Psoas muscle (tissue), 8 donors: ENCODE measurements at regions of chr3 and their contacts with region 1.

Region 1: GRCh38 chr3:44761424-44762169 is at the starts of genes KIAA1143 and KIF15:
- DNase-seq: peak; percentile 96 to 98
- ATAC-seq: peak; percentile 100
- H3K4me3 ChIP-seq: peak within 1 kb of the TSS; percentile 94
- H3K27ac ChIP-seq: peak within 1 kb of the TSS; percentile 89
- H3K4me1 ChIP-seq: peaks cover 7% of the 10 kb centered on the region
- H3K27me3 ChIP-seq: no peaks in the 10 kb centered on the region
- CTCF ChIP-seq: no peak
- total RNA-seq, gene KIAA1143: 26.7 to 45.7 (median 33.4) TPM
- total RNA-seq, gene KIF15: 0.07 to 0.45 (median 0.29) TPM

Region 2: GRCh38 chr3:44712455-44713075 is 49.0 kb before region 1 on chr3 and contains the start of gene ZNF502:
- intact Hi-C with region 1: no loop called
- DNase-seq: peak; percentile 91 to 94
- ATAC-seq: peak; percentile 92 to 100 (median 98)
- H3K4me3 ChIP-seq: peak within 1 kb of the TSS; percentile 92
- H3K27ac ChIP-seq: peak within 1 kb of the TSS; percentile 80
- H3K4me1 ChIP-seq: no peaks in the 10 kb centered on the region
- H3K27me3 ChIP-seq: peaks cover 0 to 6% (median 0%) of the 10 kb centered on the region in 3 donors
- CTCF ChIP-seq: peak; percentile 36
- total RNA-seq, gene ZNF502: 3.2 to 4.0 (median 3.7) TPM

Region 3: GRCh38 chr3:44729384-44729910 is 32.1 kb before region 1 on chr3 and contains the start of gene ZNF501:
- intact Hi-C with region 1: loop called in 1 of 2 experiments (anchors 1 kb)
- DNase-seq: peak; percentile 96 to 97
- ATAC-seq: peak; percentile 99 to 100 (median 100)
- H3K4me3 ChIP-seq: peak within 1 kb of the TSS; percentile 77
- H3K27ac ChIP-seq: peak within 1 kb of the TSS; percentile 61
- H3K4me1 ChIP-seq: no peaks in the 10 kb centered on the region
- H3K27me3 ChIP-seq: no peaks in the 10 kb centered on the region
- CTCF ChIP-seq: no peak
- total RNA-seq, gene ZNF501: 1.6 to 3.4 (median 2.6) TPM

Region 4: DNA sequence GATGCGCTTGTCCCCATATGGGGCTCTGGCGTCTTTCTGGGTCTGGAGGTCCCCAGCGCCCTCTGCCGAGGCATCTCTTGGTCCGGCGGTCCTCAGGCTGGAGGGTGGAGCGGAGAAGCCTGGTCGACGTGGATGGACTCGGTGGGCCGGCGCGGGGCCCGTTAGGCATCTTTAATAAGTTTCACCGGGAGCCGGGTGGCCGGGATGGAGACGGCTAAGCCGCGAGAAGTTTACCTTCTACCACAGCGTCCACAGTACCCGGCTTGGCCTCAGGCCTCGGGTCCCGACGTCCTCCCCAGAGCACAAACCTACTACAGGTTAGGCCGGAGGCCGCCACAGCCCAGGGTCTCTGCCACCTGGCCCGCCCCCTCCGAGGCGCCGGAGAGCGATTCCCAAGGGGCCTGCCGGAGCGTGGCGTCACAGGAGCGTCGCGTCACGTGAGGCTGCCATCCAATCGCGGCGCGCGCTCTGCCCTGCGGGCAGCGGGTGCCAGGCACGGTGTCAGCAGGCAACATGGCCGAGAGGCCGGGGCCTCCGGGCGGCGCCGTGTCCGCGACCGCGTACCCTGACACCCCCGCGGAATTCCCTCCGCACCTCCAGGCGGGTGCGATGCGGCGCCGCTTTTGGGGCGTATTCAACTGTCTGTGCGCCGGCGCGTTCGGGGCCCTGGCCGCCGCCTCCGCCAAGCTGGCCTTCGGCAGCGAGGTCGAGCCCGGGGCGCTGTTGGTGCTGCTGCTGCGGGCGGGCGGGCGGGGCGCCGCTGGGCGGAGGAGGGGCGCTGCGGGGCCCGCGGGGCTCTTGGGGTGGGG is 100.0 kb after region 1 on chr3 and contains the start of gene TMEM42:
- intact Hi-C with region 1: loop called in 1 of 2 experiments (anchors 5 kb)
- DNase-seq: peak; percentile 91 to 96
- ATAC-seq: peak; percentile 99
- H3K4me3 ChIP-seq: peak within 1 kb of the TSS; percentile 73
- H3K27ac ChIP-seq: peak within 1 kb of the TSS; percentile 96
- H3K4me1 ChIP-seq: peaks cover 21% of the 10 kb centered on the region
- H3K27me3 ChIP-seq: no peaks in the 10 kb centered on the region
- CTCF ChIP-seq: peak; percentile 21
- total RNA-seq, gene TMEM42: 7.5 to 15.6 (median 9.8) TPM

Region 5: GRCh38 chr3:44913868-44914468 is 152.4 kb after region 1 on chr3:
- intact Hi-C with region 1: loop called in 1 of 2 experiments (anchors 5 kb)
- DNase-seq: peak; percentile 52 to 72
- ATAC-seq: peak; percentile 63 to 83 (median 75)
- H3K4me3 ChIP-seq: no peak overlapping the region
- H3K27ac ChIP-seq: no peak overlapping the region
- H3K4me1 ChIP-seq: no peaks in the 10 kb centered on the region
- H3K27me3 ChIP-seq: no peaks in the 10 kb centered on the region
- CTCF ChIP-seq: peak; percentile 71